ENCODE measurements at regions of chr11 and their contacts with region 1.

Region 1: DNA sequence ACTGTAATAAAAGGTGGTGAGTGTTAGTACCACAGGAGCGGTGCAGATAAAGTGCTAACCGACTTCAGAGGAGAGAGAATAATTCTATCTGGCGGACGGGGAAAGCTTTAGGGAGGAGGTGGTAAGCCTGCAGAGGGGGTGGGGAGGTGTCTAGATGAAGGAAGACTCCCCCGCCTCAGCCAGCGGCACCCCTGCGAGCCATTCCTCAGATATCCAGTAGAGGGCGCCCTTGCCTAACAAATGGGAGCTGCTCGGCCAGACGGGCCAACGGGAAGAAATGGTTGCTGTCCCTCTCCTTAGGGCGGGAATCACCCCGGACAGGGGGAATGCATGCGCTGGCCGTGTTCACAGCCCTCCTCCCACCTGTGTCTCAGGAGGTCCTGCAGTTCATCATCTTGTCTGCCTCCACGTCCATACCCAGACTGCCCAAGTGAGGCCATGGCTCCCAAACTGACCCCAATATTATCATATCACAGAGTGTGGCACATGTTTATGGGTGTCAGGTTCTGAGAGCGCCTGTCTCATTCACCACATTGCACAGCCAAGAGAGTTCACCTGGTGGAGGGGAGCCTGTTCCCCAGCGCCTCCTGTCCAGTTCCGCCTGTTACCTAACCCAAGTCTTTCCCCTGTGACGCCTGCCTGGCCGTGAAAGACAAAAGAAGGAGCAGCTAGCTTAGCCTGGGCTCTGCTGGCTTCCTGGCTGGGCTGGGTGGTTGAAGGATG is 85.5 kb downstream of the ST3GAL4 start:
- DNase-seq: peak; percentile 65
- H3K4me3 Mint-ChIP-seq: no peak overlapping the region
- H3K27ac Mint-ChIP-seq: no peak overlapping the region
- H3K4me1 Mint-ChIP-seq: no peaks in the 10 kb centered on the region
- H3K27me3 Mint-ChIP-seq: peaks cover 9% of the 10 kb centered on the region

Region 2: DNA sequence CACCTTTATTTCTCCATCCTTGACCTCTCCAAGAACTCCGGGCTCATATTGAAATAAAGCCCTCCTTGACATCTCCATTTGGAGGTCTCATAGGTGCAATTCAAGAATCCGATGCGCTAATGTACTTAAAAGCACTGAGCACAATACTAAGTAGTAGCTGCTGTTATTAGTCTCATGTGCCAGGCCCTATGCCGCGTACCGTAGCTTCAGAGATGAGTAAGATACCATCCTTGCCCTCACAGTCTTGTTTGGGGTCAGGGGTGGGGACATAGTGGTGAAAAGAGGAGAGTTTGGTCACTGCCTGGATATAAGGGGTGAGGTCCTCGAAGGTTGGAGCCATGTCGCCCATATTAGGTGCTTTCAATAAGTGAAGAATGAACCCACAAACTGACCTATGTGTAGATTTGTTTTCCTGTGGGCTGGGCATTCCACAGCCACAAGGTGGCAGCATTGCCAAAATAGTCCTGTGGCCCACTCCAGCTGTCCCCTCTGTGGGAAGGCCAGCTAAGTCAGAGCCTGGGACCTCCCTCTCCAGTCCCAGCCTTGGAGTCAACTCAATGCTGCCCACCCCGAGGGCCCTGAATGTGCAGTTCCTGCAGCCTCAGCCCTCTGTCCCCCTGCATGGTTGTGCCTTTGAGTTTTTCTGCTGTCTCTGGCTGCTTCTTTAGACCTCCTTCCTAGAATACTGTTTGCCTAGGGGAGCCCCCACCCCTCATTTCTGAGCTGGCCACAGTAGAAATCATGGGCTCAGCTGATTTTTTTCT is 130.5 kb before region 1 on chr11:
- intact Hi-C with region 1: loop called (anchors 1 kb)
- DNase-seq: peak; percentile 41
- H3K4me3 Mint-ChIP-seq: no peak overlapping the region
- H3K27ac Mint-ChIP-seq: peak overlapping the region; percentile 13
- H3K4me1 Mint-ChIP-seq: peaks cover 39% of the 10 kb centered on the region
- H3K27me3 Mint-ChIP-seq: no peaks in the 10 kb centered on the region

Region 3: DNA sequence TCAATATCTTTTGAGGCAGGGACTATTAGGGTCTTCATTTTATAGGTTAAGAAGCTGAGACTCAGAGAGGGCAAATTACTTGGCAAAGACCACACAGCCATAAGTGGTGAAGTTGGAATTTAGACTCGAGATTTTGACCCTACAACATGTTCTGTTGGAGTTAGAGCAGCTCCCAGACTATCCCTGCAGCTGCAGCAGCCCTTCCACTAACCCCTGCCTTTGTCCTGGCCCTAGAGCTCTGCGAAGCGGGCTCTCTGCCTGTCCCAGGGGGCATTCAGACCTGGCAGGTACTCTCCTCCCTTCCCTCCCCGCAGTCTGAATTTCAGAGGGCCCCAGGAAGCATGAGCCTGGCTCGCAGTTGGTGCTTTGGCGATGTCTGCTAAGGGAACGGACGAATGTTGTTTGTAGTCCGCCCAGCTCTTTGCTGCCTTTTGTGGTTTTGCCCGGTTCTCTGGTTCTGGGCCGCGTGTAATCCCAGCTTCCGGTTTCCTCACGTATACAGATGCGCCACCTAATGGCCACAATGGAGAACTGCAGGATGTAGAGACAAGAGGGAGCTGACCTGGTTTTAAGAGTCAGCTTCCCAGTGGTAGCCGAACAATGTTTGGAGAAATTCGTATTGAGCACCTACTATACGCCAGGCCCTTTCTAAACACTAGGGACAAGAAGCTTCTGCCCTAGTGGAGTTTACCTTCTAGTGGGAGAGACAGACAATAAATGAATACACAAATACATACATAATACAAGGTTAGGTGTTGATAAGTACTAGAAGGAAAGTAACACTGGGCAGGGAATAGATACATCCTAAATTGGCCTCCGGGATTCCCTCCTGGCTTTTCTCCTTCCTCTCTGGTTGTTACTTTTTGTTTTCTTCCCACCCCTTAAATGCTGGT is 39.7 kb after region 1 on chr11:
- intact Hi-C with region 1: loop called (anchors 1 kb)
- DNase-seq: peak; percentile 66
- H3K4me3 Mint-ChIP-seq: peak overlapping the region; percentile 23
- H3K27ac Mint-ChIP-seq: peak overlapping the region; percentile 87
- H3K4me1 Mint-ChIP-seq: peaks cover 33% of the 10 kb centered on the region
- H3K27me3 Mint-ChIP-seq: peaks cover 3% of the 10 kb centered on the region

Region 4: DNA sequence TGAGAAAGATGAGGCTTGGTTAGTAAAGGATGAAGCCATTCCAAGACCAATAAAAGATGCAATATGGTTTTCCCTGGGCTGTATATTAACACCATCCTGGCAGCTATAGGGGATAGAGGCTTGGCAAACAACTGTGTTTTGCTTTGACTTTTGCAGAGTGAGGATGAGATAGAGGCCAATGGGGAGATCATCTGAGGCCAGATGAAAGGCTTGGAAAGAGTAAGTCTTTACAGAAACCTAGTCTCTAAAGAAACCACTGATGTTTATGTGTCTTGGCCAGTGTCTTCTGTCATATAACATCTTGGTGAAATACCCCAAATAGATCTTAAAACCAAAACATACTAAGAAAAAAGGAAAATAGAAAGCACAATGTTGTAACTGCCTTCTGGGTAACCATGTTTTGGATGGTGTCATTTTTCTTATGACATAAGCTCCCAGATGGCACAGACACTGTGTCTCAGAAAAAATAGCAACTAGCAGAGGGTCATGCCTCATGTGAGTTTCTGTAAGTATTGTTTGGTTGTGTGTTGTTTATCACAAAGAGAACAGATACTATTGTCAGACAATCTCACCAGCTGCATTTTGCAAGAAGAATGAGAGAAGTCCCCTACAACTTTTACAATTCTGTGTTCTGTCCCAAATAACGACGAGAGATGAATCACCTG is 219.9 kb after region 1 on chr11:
- intact Hi-C with region 1: no loop called
- DNase-seq: no peak
- H3K4me3 Mint-ChIP-seq: no peak overlapping the region
- H3K27ac Mint-ChIP-seq: no peak overlapping the region
- H3K4me1 Mint-ChIP-seq: no peaks in the 10 kb centered on the region
- H3K27me3 Mint-ChIP-seq: no peaks in the 10 kb centered on the region

Region 5: DNA sequence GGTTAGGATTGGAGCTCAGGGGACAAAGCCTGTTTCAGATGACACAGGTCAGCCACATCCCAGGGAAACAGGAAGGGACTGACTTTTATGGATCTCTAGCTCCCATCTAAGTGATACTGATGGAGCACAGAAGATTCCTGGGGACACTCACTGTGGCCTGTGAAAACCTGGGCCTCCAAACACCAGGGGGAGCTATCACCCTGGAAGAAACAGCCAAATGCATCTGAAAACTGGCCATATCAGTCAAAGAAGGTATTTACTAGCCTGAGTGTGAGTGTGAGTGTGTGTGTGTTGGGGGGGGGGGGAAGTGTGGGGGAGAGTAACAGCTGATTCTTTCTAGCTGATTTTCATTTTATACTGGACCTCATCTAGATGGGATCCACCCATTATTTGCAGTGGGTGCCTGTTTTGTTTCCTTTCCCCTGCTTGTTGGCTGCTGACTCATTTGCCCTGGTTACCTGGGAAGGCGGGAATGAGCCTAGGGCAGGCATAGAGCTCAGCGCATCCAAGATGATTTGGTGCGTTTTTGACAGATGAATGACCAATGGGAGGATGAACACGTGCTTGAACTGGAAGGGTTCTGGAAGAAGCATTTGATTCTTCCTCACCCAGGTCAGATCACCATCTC is 275.6 kb after region 1 on chr11:
- intact Hi-C with region 1: loop called (anchors 10 kb)
- DNase-seq: no peak
- H3K4me3 Mint-ChIP-seq: no peak overlapping the region
- H3K27ac Mint-ChIP-seq: no peak overlapping the region
- H3K4me1 Mint-ChIP-seq: no peaks in the 10 kb centered on the region
- H3K27me3 Mint-ChIP-seq: peaks cover 2% of the 10 kb centered on the region

Region 6: DNA sequence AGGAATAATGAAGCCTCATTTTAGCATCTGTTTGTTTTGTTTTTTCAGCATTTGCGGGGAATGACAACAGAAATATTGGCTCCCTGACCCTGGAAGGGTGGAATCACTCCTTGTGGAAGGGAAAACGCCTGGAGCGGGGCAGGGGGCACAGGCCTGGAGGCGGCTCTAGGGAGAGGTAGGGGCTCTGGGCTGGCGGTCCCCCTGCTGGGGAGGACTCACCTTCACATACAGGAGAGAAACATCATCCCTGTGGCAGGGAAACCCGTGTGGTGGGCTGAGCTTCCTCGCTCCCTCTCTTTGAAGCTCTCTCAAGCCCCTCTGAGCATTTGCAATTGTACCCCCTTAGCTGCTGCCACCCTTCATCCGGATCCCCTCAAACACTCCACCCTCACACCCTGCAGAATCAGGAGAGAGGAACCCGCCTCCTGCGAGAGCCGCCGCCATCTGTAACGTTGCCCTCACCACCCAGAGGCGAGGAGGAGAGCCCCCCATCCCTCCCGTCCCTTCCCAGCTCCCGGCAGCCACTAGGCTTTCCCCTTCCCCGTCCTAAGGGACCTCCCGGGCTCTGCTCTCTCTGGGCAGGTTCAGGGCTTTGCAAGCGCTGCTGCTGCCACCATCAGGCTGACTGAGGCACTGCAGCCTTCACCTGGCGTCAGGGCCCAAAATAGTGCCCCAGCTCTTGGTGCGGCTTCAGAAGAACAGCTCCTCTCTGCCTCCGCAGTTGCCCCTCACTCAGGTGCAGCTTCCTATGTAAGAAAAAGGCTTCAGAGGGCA is 549.2 kb after region 1 on chr11:
- intact Hi-C with region 1: loop called (anchors 1 kb)
- DNase-seq: peak; percentile 22
- H3K4me3 Mint-ChIP-seq: no peak overlapping the region
- H3K27ac Mint-ChIP-seq: no peak overlapping the region
- H3K4me1 Mint-ChIP-seq: no peaks in the 10 kb centered on the region
- H3K27me3 Mint-ChIP-seq: peaks cover 2% of the 10 kb centered on the region

Region 7: DNA sequence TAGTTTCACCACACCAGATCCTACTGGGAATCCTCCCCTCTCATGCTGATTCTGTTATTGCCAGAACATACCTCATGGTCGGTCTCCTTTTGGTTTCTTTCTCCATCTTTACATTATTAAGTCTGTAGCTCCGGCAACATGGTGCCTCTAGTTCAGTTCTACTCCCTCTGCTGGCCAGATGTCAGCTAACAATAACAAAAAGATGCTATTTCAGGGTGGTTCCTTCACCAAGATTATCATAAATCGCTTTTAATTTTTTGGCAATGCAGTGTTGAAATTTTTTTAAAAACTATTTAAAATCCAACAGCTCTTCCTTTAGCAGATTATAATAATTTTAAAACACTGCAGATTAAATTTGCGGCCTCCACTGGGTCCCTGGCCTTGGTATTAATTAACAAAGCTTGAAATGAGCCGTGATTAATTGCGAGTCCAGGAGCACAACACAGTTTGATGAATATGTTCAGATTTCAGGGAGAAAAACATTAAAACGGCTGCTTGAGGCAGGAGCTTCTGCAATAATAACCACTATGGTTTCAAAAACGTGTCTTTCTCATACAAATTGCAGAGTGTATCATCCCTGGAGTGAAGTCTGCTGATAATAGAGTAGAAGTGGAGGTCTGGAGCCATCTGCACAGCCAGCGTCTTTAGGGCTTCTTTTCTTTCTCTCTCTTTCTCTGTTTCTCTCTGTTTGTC is 1052.5 kb after region 1 on chr11:
- intact Hi-C with region 1: loop called (anchors 2 kb)
- DNase-seq: no peak
- H3K4me3 Mint-ChIP-seq: no peak overlapping the region
- H3K27ac Mint-ChIP-seq: no peak overlapping the region
- H3K4me1 Mint-ChIP-seq: no peaks in the 10 kb centered on the region
- H3K27me3 Mint-ChIP-seq: peaks cover 1% of the 10 kb centered on the region

Measured in activated T-helper 1 cell treated with anti-CD3 and anti-CD28 coated beads, Interleukin-12 subunit alpha, Interleukin-12 subunit beta, Interleukin-2, Interleukin-4 antibody, amounts not matched to agents 30 ng/mL and 10 ng/mL and 1 ng/mL, durations not matched to agents 14 hours and 24 hours and 36 hours (primary cell).